GM12878 (cell line): ENCODE measurements at regions of chrX and their contacts with region 1.

Region 1: GRCh38 chrX:13263560-13264251 is 56.1 kb downstream of the ATXN3L start:
- DNase-seq: peak; percentile 66
- ATAC-seq: peak; percentile 92
- H3K4me3 ChIP-seq: no peak overlapping the region; the same call in 1 of the 2 replicates
- H3K27ac ChIP-seq: peak overlapping the region; percentile 66
- H3K4me1 ChIP-seq: peaks cover 20% of the 10 kb centered on the region
- H3K27me3 ChIP-seq: no peaks in the 10 kb centered on the region
- CTCF ChIP-seq: no peak
- EP300 ChIP-seq: no peak; a peak in 1 of 4 replicates
- POLR2A ChIP-seq: no peak
- RAD21 ChIP-seq: no peak

Region 2: GRCh38 chrX:13322804-13323203 is 59.1 kb after region 1 on chrX:
- CTCF ChIA-PET with region 1: no interaction called
- POLR2A ChIA-PET with region 1: no interaction called
- RAD21 ChIA-PET with region 1: no interaction called
- SMC1A ChIA-PET with region 1: no interaction called
- in situ Hi-C with region 1: no loop called
- intact Hi-C with region 1: no loop called
- DNase-seq: no peak
- ATAC-seq: no peak
- H3K4me3 ChIP-seq: no peak overlapping the region
- H3K27ac ChIP-seq: no peak overlapping the region
- H3K4me1 ChIP-seq: no peaks in the 10 kb centered on the region
- H3K27me3 ChIP-seq: no peaks in the 10 kb centered on the region
- CTCF ChIP-seq: no peak
- EP300 ChIP-seq: no peak
- POLR2A ChIP-seq: no peak
- RAD21 ChIP-seq: no peak

Region 3: DNA sequence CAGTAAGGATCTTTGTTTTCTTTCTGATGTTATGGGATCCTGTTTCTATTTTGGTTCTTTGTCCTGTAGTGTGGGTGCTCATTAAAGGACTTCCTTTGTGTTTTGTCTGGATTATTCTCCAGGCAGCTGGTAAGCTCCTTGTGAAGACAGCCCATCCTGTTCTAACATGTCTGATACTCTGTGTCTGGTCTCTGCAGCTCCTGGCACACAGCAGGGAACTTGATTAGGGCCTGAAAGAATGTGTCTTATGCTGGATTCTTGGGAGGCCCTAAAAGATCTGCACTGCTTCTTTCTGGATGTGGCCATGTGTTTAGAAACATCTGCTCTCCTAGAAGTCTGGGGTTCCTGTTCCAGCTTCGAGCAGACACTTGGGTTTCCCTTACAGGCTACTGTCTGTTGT is 94.2 kb after region 1 on chrX:
- CTCF ChIA-PET with region 1: interaction called, 3 read pairs
- POLR2A ChIA-PET with region 1: no interaction called
- RAD21 ChIA-PET with region 1: no interaction called
- SMC1A ChIA-PET with region 1: interaction called, 13 read pairs
- in situ Hi-C with region 1: no loop called
- intact Hi-C with region 1: no loop called
- DNase-seq: no peak
- ATAC-seq: no peak
- H3K4me3 ChIP-seq: no peak overlapping the region
- H3K27ac ChIP-seq: no peak overlapping the region
- H3K4me1 ChIP-seq: no peaks in the 10 kb centered on the region
- H3K27me3 ChIP-seq: no peaks in the 10 kb centered on the region
- CTCF ChIP-seq: no peak
- EP300 ChIP-seq: no peak
- POLR2A ChIP-seq: no peak
- RAD21 ChIP-seq: no peak

Region 4: DNA sequence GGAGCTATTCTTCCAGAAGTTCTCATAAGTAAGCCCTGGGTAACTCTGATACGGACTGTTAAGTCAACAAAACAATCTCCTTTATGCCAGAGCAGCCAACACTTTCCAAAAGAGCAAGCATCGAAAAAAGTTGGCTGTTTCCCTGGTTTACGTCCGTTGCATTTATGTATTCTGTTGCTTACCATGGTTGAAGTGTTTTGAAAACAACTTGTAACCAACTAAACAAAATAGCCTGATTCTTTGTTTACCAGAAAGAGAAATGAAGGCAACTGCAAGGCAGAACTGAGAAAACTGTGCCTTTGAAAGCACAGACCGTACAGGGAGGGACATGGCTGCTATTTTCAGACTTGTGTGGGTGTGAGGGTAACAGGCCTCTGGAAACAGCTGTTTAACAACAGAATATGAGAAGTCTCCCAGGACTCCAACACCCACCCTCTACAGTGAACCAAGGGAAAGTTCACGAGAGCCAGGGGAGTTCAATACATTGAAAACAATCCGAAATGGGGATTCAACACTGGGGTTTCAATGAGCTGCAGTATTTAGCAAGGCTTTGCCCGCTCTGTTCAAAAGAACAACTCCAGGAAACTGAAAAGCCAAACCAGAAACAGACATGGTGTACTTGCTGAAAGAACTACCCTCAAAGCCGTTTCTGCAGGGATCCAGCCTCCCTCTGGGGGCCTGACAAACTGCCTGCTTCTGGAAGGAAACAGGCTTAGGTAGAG is 209.9 kb after region 1 on chrX:
- CTCF ChIA-PET with region 1: interaction called, 4 read pairs
- POLR2A ChIA-PET with region 1: interaction called, 3 read pairs
- RAD21 ChIA-PET with region 1: interaction called, 5 read pairs
- SMC1A ChIA-PET with region 1: interaction called, 27 read pairs
- in situ Hi-C with region 1: no loop called
- intact Hi-C with region 1: no loop called
- DNase-seq: peak; percentile 52
- ATAC-seq: peak; percentile 92
- H3K4me3 ChIP-seq: peak overlapping the region; percentile 52; the same call in 1 of the 2 replicates
- H3K27ac ChIP-seq: peak overlapping the region; percentile 88
- H3K4me1 ChIP-seq: no peaks in the 10 kb centered on the region
- H3K27me3 ChIP-seq: no peaks in the 10 kb centered on the region
- CTCF ChIP-seq: no peak
- EP300 ChIP-seq: peak; percentile 51 to 81; a peak in 3 of 4 replicates
- POLR2A ChIP-seq: no peak
- RAD21 ChIP-seq: no peak